Psoas muscle (tissue), 8 donors: ENCODE measurements at regions of chr15 and their contacts with region 1.

Region 1: DNA sequence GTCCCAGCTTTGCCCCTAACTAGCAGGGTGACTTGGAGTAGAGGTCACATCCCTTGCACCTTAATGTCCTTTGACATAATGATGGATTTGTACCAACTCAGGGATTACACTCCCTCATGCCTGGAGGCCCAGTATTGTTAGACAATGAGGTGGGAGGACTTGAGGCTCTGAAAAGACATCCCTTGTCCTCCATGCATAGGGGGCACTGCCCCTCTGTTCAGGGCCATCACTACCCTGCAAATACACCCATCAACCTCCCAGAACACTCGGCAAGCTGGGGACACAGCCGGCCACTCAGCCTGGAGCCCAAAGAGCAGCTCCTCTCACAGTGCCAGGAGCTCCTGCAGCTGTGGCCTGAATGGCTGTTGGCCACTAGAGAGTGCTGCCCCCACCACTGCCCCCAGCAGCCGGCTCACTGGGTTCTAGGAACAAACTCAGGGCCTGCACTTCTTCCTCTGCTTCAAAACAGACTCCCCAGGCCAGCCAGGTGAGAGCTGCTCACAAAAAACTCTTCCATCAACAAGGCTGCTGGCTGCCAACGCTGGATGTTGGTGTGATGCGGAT is 90.2 kb downstream of the GABRB3 start:
- DNase-seq: no peak
- ATAC-seq: no peak
- H3K4me3 ChIP-seq: no peak overlapping the region
- H3K27ac ChIP-seq: no peak overlapping the region
- H3K4me1 ChIP-seq: no peaks in the 10 kb centered on the region
- H3K27me3 ChIP-seq: no peaks in the 10 kb centered on the region
- CTCF ChIP-seq: no peak

Region 2: DNA sequence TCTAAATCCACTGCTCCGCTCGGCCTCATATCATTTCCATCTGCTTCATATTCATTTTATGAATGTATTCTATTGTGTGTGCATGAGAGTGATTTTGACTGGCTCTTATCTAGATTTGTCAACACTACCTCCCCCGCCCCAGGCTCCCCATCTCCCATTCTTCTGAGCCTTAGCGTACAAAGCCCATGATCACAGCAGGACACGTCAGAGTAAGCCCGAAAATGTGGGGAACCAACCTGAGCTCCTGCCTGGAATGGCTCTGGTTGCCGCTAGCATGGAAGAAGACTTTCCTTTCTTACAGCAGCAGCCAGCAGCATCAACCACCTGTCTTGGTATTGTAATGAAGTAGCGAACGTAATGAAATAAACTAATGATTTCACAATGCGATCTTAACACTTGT is 28.8 kb after region 1 on chr15:
- intact Hi-C with region 1: no loop called
- DNase-seq: no peak
- ATAC-seq: no peak
- H3K4me3 ChIP-seq: no peak overlapping the region
- H3K27ac ChIP-seq: no peak overlapping the region
- H3K4me1 ChIP-seq: no peaks in the 10 kb centered on the region
- H3K27me3 ChIP-seq: no peaks in the 10 kb centered on the region
- CTCF ChIP-seq: no peak

Region 3: DNA sequence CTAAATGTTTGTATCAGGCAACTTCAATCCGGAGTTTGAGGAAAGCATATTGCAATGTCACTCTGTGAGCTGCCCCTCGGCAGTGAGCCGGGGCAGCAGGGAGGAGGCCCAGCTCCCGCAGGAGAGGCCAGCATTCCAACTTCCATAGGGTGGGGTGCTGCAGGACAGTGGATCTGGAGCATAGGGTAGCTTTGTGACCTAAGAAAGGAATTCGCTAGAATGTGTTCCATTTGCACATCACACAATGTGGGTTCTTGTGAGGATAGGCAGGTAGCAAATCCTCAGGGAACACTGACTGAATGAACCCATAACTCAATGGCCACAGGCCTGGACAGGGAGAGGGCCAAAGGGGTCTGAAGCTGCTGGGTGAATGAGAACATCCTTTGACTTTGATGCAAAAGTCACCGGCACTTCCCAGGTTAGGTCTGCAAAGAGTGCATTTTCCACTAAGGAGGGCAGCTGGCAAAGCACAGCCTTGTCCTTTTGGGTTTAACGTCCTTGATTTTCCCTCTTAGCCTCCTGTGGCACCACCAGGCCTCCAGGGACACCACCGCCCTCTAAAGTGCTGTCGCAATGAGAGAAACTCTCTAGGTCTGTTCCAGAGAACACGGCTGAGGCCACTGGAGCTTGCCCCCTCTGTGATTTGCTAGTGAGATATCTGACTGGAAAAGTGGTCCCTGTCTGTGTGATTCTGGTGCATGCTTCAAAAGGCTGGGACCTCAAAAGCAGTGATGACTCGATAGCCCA is 54.0 kb after region 1 on chr15:
- intact Hi-C with region 1: loop called in 1 of 2 experiments (anchors 10 kb)
- DNase-seq: no peak
- ATAC-seq: no peak
- H3K4me3 ChIP-seq: no peak overlapping the region
- H3K27ac ChIP-seq: no peak overlapping the region
- H3K4me1 ChIP-seq: no peaks in the 10 kb centered on the region
- H3K27me3 ChIP-seq: no peaks in the 10 kb centered on the region
- CTCF ChIP-seq: no peak